ENCODE measurements at regions of chr12 and their contacts with region 1.

Region 1: DNA sequence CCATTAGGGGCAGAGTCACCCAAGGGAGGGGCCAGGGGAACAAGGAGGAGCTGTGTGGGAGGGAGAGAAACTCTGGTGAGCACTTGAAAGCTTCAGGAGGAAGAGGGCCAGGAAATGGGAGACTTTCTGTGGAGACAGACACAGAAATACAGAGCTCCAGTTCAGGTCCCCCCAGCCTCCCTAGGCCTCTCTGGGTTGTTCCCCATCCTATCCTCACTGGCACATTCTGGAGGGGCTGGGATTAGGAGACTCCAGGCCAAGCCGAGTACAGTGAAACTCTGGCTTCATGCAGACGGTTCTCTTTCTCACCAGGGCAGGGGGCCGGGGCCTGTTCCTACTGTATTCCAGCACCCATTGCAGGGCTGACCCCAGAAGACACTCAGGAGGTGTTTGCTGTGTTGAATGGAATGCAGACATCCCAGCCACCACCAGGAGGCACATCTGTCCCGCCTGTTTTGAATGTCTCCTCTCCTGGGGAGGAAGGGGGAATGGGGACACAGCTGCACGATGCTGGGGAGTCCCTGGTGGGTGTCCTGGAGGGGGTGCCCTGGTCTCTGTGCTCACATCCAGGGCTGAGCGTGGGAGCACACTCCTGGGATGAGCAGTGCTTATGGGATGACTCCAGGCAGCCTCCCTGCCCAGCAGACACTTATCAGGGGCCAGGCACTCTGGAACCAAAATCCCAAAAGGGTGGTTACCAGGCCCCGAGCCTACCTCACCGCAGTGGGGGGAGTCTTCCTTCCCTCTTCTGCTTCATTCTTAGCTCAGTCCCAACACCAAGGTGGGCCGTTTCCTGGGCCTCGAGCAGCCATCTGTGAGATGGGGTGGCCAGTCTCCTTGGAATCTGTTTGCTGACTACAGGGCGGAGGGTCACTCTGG is 5.5 kb upstream of the KRT84 start:
- DNase-seq: no peak
- H3K4me3 ChIP-seq: no peak overlapping the region
- CTCF ChIP-seq: peak; percentile 73

Region 2: DNA sequence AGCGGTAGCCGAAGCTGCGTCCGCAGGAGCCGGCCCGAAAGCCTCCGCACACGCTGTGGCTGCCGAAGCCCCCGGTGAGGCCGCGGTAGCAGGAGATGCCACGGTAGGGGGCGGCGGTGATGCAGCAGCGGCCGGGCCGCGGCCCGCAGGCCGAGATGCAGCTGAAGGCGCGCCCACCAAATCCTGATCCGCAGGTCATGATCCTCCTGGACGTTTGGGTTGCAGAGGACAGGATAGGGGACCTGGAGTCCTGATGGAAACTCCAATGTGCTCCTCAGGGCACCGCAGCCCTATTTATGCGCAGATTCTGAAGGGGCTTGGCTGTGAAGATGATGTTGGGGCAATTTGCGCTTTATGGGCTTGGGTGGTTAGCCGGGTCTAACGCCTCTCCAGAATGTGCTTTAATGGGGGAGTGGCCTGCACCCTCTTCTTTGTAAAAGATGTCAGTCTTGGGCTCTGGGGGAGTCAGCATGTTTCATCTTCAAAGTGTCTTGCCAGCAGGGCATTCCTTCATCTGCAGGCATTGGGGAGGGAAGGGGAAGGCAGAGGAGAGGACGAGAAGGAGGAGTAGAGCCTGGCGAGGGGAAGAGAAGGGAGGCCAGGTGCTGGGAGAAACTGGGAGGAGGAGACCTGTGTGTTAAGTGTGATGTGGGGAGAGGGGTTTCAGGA is 99.6 kb before region 1 on chr12 and contains the start of gene KRT81:
- CTCF ChIA-PET with region 1: no interaction called
- POLR2A ChIA-PET with region 1: no interaction called
- DNase-seq: no peak
- H3K4me3 ChIP-seq: no peak within 1 kb of the TSS
- CTCF ChIP-seq: no peak

Region 3: GRCh38 chr12:52380271-52380694 is 10.7 kb before region 1 on chr12:
- CTCF ChIA-PET with region 1: interaction called, 137 read pairs
- POLR2A ChIA-PET with region 1: no interaction called
- DNase-seq: no peak
- H3K4me3 ChIP-seq: no peak overlapping the region
- CTCF ChIP-seq: peak; percentile 66

Region 4: GRCh38 chr12:52506858-52507715 is 116.1 kb after region 1 on chr12:
- CTCF ChIA-PET with region 1: interaction called, 13 read pairs
- POLR2A ChIA-PET with region 1: no interaction called
- DNase-seq: peak; percentile 51
- H3K4me3 ChIP-seq: no peak overlapping the region
- CTCF ChIP-seq: peak; percentile 46

Region 5: GRCh38 chr12:52582971-52583456 is 192.0 kb after region 1 on chr12:
- CTCF ChIA-PET with region 1: interaction called, 13 read pairs
- POLR2A ChIA-PET with region 1: no interaction called
- DNase-seq: peak; percentile 4
- H3K4me3 ChIP-seq: no peak overlapping the region
- CTCF ChIP-seq: peak; percentile 82

Region 6: GRCh38 chr12:52870351-52871290 is 479.6 kb after region 1 on chr12:
- CTCF ChIA-PET with region 1: interaction called, 12 read pairs
- POLR2A ChIA-PET with region 1: no interaction called
- DNase-seq: no peak
- H3K4me3 ChIP-seq: no peak overlapping the region
- CTCF ChIP-seq: peak; percentile 86